ENCODE measurements at regions of chr14 and their contacts with region 1.

Region 1: DNA sequence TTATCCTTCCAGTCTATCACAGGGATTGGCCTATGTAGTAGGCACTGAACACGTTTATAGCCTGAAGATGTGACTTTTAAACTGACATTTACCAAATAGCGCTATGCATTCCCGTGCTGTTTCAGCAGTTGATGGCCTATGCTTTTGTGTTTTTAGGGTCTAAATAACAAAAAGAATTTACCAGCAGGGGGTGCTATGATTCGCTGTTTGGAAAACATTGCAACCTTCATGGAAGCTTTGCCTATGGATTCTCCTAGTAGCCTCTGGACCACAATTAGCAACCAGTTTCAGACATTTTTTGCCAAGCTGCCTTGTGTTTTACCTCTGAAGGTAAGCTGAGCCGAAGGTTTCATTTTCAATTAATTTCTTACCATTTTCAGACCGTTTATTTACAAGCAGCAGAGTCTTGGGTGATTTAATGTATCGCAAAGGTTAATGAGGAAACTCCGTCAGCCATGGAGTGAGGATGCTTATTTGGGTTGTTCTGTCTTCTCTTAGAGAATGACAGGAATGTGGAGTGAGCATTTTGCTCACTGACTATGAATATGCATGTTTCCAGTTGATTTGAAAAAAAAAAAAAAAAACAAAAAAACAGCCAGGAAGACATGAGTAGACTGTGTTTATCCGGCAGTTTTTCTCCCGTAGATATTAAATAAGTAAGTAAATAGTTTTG is 133.1 kb downstream of the PRIMA1 start:
- DNase-seq: peak in 4 of 7 donors; percentile 13 to 31 (median 25)
- H3K4me3 ChIP-seq: no peak overlapping the region
- H3K27ac ChIP-seq: no peak overlapping the region
- H3K4me1 ChIP-seq: no peaks in the 10 kb centered on the region
- H3K27me3 ChIP-seq: no peaks in the 10 kb centered on the region
- CTCF ChIP-seq: peak; percentile 39 to 61 (median 48)
- POLR2A ChIP-seq: no peak

Region 2: GRCh38 chr14:93892923-93893558 is 237.8 kb after region 1 on chr14:
- intact Hi-C with region 1: loop called (anchors 5 to 10 kb)
- DNase-seq: peak; percentile 50 to 89 (median 71)
- H3K4me3 ChIP-seq: no peak overlapping the region
- H3K27ac ChIP-seq: no peak overlapping the region
- H3K4me1 ChIP-seq: peaks cover 0 to 5% of the 10 kb centered on the region in 2 donors
- H3K27me3 ChIP-seq: peaks cover 5% of the 10 kb centered on the region
- CTCF ChIP-seq: peak; percentile 81 to 98 (median 90)
- POLR2A ChIP-seq: no peak

Measured in adrenal gland (tissue), 19 donors.